ENCODE measurements at regions of chr19 and their contacts with region 1.

Region 1: GRCh38 chr19:21020298-21021227 is at the start of gene ZNF430:
- DNase-seq: peak; percentile 97
- ATAC-seq: peak; percentile 99
- H3K4me3 Mint-ChIP-seq: peak within 1 kb of the TSS; percentile 99
- H3K27ac Mint-ChIP-seq: peak within 1 kb of the TSS; percentile 98
- H3K4me1 Mint-ChIP-seq: peaks cover 26% of the 10 kb centered on the region
- H3K27me3 Mint-ChIP-seq: no peaks in the 10 kb centered on the region
- CTCF ChIP-seq: no peak
- total RNA-seq, gene ZNF430: 10.2 to 12.3 TPM (median 10.6 TPM) in 3 replicates

Region 2: DNA sequence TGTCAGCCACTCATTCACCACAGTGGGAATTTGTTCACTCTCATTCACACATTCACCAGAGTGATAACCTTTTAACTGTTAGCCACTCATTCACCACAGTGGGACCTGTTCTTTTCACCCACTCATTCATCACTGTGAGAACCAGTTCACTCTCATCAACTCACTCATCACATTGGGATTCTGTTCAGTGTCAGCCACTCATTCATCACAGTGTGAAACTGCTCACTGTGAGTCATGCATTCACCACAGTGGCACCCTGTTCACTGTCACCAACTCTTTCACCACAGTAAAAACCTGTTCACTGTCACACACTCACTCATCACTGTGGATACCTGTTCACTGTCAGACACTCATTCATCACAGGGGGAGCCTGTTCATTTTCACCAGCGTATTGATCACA is 141.1 kb before region 1 on chr19:
- CTCF ChIA-PET with region 1: no interaction called
- POLR2A ChIA-PET with region 1: no interaction called
- DNase-seq: no peak
- ATAC-seq: no peak
- H3K4me3 Mint-ChIP-seq: no peak overlapping the region
- H3K27ac Mint-ChIP-seq: no peak overlapping the region
- H3K4me1 Mint-ChIP-seq: no peaks in the 10 kb centered on the region
- H3K27me3 Mint-ChIP-seq: peaks cover 58% of the 10 kb centered on the region
- CTCF ChIP-seq: no peak

Region 3: GRCh38 chr19:21082011-21082975 is 61.7 kb after region 1 on chr19 and contains the start of gene ZNF714:
- CTCF ChIA-PET with region 1: no interaction called
- POLR2A ChIA-PET with region 1: interaction called, 11 read pairs
- DNase-seq: peak; percentile 92
- ATAC-seq: peak; percentile 98
- H3K4me3 Mint-ChIP-seq: peak within 1 kb of the TSS; percentile 100
- H3K27ac Mint-ChIP-seq: peak within 1 kb of the TSS; percentile 99
- H3K4me1 Mint-ChIP-seq: peaks cover 35% of the 10 kb centered on the region
- H3K27me3 Mint-ChIP-seq: no peaks in the 10 kb centered on the region
- CTCF ChIP-seq: no peak
- total RNA-seq, gene ZNF714: 50.0 to 60.4 TPM (median 50.8 TPM) in 3 replicates

Region 4: DNA sequence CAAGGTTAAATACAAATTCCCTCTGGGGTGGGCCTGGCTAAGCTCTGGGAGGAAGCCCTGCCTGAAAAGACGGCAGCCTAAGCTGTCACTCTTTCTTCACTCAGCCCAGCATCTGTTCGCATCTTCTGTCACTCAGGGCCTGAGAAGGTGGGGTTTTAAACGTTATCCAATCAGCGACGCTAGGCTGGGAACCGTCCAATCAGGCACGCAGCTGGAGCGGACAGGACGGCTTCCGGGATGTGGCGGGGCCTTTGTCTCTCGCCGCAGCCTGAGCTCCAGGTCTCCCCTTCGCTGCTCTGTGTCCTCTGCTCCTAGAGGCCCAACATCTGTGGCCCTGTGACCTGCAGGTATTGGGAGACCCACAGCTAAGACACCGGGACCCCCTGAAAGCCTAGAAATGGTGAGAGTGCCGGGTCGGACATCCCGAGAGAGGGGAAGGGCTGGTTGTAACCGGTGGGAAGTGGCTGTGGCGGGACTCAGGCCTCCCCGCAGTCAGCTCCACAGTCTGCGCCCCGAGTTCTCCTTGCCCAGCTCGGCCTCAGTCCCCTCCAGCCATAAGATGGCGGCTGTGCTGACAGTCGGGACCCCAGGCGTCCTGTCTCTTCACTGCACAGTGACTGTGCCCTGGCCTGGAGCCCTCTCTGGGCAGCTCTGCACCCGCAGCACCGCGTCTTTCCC is 121.4 kb after region 1 on chr19 and contains the start of gene ZNF431:
- CTCF ChIA-PET with region 1: no interaction called
- POLR2A ChIA-PET with region 1: interaction called, 12 read pairs
- DNase-seq: peak; percentile 92
- ATAC-seq: peak; percentile 99
- H3K4me3 Mint-ChIP-seq: peak within 1 kb of the TSS; percentile 98
- H3K27ac Mint-ChIP-seq: peak within 1 kb of the TSS; percentile 99
- H3K4me1 Mint-ChIP-seq: peaks cover 5% of the 10 kb centered on the region
- H3K27me3 Mint-ChIP-seq: no peaks in the 10 kb centered on the region
- CTCF ChIP-seq: no peak
- total RNA-seq, gene ZNF431: 41.2 to 45.2 TPM (median 42.1 TPM) in 3 replicates

Region 5: GRCh38 chr19:21158523-21159135 is 138.1 kb after region 1 on chr19:
- CTCF ChIA-PET with region 1: no interaction called
- POLR2A ChIA-PET with region 1: no interaction called
- DNase-seq: no peak
- ATAC-seq: no peak
- H3K4me3 Mint-ChIP-seq: no peak overlapping the region
- H3K27ac Mint-ChIP-seq: 0 out of 2 replicates have a peak overlapping the region, but pooled peaks have one; percentile 25
- H3K4me1 Mint-ChIP-seq: peaks cover 8% of the 10 kb centered on the region
- H3K27me3 Mint-ChIP-seq: no peaks in the 10 kb centered on the region
- CTCF ChIP-seq: no peak

Measured in WTC11 (cell line).